ENCODE measurements at regions of chr12 and their contacts with region 1.

Region 1: GRCh38 chr12:68279227-68280054 is 26.0 kb upstream of the IL22 start:
- DNase-seq: no peak
- H3K4me3 Mint-ChIP-seq: no peak overlapping the region
- H3K27ac Mint-ChIP-seq: peak overlapping the region; percentile 45
- H3K4me1 Mint-ChIP-seq: peaks cover 61% of the 10 kb centered on the region
- H3K27me3 Mint-ChIP-seq: no peaks in the 10 kb centered on the region

Region 2: GRCh38 chr12:68223083-68223747 is 56.2 kb before region 1 on chr12:
- intact Hi-C with region 1: loop called (anchors 1 kb)
- DNase-seq: peak; percentile 68
- H3K4me3 Mint-ChIP-seq: peak overlapping the region; percentile 79
- H3K27ac Mint-ChIP-seq: peak overlapping the region; percentile 61
- H3K4me1 Mint-ChIP-seq: peaks cover 56% of the 10 kb centered on the region
- H3K27me3 Mint-ChIP-seq: no peaks in the 10 kb centered on the region

Region 3: DNA sequence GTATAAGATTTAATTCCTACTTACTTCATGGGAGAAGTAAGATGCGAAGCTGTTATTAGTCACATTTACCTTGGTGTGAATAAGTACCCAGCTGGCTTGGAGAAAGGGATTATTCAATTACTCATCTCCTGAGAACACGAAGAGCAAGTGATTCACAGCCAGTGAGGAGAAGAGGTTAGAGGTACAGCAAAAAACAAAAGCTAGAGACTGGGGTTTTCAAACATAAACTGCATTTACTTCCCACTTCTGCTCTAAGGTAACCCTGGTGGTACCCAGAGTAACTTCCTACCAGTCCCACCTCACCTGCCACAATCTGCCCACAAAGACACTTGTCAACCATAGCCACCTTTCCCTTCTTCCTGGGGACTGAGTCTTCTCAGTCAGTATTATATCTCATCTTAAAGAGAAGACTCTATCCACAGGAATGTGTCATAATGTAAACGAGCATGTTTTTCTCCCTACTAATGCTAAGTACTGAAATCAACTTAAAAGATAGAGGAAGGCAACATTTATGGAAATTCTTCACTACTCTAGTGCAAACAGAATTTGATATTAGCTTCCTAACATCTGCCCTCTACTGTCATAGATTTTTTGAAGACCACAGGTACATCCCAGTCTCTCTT is 20.0 kb before region 1 on chr12:
- intact Hi-C with region 1: loop called (anchors 1 kb)
- DNase-seq: peak; percentile 31
- H3K4me3 Mint-ChIP-seq: peak overlapping the region; percentile 12
- H3K27ac Mint-ChIP-seq: peak overlapping the region; percentile 69
- H3K4me1 Mint-ChIP-seq: peaks cover 68% of the 10 kb centered on the region
- H3K27me3 Mint-ChIP-seq: peaks cover 19% of the 10 kb centered on the region

Region 4: DNA sequence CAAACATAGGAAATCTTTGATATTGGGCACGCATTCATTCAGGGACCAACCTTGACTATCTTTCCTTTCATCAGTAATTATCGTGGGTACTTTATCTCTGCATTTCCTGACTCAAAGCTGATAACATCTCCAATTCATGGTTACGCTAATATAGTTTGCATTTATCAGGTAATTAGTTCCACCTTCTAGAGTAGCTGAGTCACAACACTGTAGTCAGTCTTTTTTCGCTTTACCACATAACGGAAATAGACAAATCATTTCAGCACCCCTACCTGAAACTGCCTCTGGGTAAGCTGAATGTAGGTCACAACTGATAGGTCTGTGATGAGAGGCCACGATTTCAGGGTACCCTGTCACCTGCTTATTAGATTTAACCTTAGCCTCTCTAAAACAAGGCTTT is 10.7 kb after region 1 on chr12:
- intact Hi-C with region 1: loop called (anchors 1 kb)
- DNase-seq: peak; percentile 45
- H3K4me3 Mint-ChIP-seq: peak overlapping the region; percentile 15
- H3K27ac Mint-ChIP-seq: peak overlapping the region; percentile 59
- H3K4me1 Mint-ChIP-seq: peaks cover 75% of the 10 kb centered on the region
- H3K27me3 Mint-ChIP-seq: peaks cover 3% of the 10 kb centered on the region

Region 5: GRCh38 chr12:68317047-68317667 is 37.7 kb after region 1 on chr12:
- intact Hi-C with region 1: loop called (anchors 2 kb)
- DNase-seq: no peak
- H3K4me3 Mint-ChIP-seq: no peak overlapping the region
- H3K27ac Mint-ChIP-seq: no peak overlapping the region
- H3K4me1 Mint-ChIP-seq: peaks cover 17% of the 10 kb centered on the region
- H3K27me3 Mint-ChIP-seq: no peaks in the 10 kb centered on the region

Measured in activated T-helper 1 cell treated with anti-CD3 and anti-CD28 coated beads, Interleukin-12 subunit alpha, Interleukin-12 subunit beta, Interleukin-2, Interleukin-4 antibody, amounts not matched to agents 30 ng/mL and 10 ng/mL and 1 ng/mL, durations not matched to agents 14 hours and 24 hours and 36 hours (primary cell).